Activated CD4-positive, alpha-beta T cell treated with anti-CD3 and anti-CD28 coated beads for 36 hours (primary cell): ENCODE measurements at regions of chr3 and their contacts with region 1.

Region 1: DNA sequence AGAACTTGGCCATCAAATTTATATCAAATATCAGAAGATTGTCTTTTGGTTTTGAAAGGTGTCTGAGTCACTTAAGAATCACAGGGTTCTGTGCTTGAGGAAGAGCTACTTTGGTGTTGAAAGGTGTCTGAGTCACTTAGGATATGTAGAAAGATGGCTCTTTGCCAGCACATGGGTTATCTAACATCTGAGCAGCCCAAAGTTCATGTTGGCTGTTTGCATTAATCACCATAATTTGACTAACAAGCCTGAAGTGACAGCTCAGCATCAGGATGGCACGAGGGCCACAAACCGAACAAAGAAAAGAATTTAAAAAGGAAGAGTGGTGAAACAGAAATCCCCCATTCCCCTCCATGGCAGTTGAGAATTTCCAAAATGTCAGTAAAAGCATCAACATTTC is 190.5 kb upstream of the CMC1 start:
- DNase-seq: peak; percentile 64
- ATAC-seq: peak; percentile 80
- H3K4me3 Mint-ChIP-seq: no peak overlapping the region
- H3K27ac Mint-ChIP-seq: peak overlapping the region; percentile 4
- H3K4me1 Mint-ChIP-seq: peaks cover 32% of the 10 kb centered on the region
- H3K27me3 Mint-ChIP-seq: peaks cover 6% of the 10 kb centered on the region

Region 2: DNA sequence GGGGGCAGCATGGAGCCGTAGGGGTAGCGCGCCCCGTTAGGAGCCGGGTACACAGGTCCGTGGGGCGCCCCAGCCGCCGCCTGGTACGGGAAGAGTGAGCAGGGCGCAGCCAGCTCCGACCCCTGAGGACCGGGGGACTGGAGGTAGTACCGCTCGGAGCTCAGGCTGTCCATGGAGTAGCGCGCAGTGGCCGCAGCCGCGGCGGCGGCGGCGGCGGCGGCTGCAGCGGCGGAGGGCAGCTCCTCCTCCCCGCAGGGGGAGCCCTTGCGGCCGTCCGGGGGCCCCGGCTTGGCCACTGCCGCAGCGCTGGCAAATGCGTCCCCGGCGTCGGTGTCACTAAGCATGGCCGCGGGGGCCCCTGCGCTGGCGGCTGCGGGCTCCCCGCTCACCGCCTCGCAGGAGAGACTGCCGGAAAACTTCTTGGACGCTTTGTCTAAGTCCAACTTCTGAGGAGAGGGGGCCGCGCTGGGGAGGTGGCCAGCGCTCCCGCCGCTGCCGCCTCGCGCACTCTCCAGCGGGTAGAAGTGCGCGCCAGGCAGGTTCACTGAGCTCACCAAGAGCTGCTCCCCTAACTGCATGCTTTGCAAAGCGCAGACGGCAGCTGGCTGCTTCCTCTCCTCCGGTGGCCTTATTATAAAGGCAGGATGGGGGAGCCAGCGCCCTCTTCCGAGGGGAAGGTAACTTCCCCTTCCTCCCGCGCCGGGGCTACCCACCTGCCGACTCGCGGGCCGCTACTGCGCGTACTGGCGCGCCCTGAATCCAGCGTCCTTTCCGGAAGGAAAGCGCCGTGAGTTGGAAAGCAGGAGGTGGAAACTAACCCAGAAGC is 329.0 kb before region 1 on chr3 and contains the start of gene EOMES:
- CTCF ChIA-PET with region 1: no interaction called
- POLR2A ChIA-PET with region 1: no interaction called
- intact Hi-C with region 1: loop called (anchors 5 to 10 kb)
- DNase-seq: peak; percentile 82
- ATAC-seq: peak; percentile 74
- H3K4me3 Mint-ChIP-seq: peak within 1 kb of the TSS; percentile 72
- H3K27ac Mint-ChIP-seq: no peak within 1 kb of the TSS
- H3K4me1 Mint-ChIP-seq: peaks cover 22% of the 10 kb centered on the region
- H3K27me3 Mint-ChIP-seq: peaks cover 72% of the 10 kb centered on the region
- total RNA-seq, gene EOMES: 0.25 TPM

Region 3: DNA sequence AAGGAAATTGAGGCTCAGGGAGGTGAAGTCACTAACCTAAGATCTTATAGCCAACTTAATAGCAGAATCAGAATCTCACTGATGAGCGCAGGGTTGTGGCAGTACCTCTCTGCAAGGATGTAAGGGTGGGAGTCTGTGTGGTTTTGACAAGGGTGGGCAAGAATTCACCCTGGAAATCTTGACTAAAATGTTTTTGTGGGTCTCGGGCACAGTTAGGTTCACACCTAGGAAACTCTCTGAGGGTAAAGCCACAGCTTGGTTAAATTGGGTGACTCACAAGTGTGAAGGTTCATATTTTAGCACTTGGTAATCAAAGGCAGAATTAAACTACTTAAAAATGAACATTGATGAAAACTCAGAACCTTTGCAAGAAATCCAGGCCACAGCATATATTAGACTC is 150.6 kb before region 1 on chr3:
- CTCF ChIA-PET with region 1: no interaction called
- POLR2A ChIA-PET with region 1: no interaction called
- intact Hi-C with region 1: loop called in 1 of 2 experiments (anchors 5 kb)
- DNase-seq: peak; percentile 26
- ATAC-seq: peak; percentile 76
- H3K4me3 Mint-ChIP-seq: no peak overlapping the region
- H3K27ac Mint-ChIP-seq: no peak overlapping the region
- H3K4me1 Mint-ChIP-seq: peaks cover 43% of the 10 kb centered on the region
- H3K27me3 Mint-ChIP-seq: no peaks in the 10 kb centered on the region

Region 4: DNA sequence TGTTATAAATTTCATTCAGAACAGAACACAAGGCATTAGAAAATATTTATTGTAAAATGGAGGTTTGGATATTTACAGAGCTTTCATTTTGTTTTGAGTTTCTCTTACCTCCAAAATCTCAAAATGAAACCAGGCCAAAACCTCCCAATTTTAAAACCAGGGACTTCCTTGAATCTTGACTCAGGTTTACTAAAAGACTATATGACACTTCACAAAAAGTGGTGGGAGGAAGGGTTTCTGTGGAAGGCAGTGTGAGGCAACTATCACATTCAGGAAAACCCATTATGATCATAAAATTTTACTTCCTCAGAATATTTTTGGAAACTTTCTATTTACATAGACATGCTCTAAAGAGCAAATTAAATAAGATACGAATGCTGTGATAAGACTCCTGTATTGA is 123.0 kb before region 1 on chr3:
- CTCF ChIA-PET with region 1: no interaction called
- POLR2A ChIA-PET with region 1: no interaction called
- intact Hi-C with region 1: loop called in 1 of 2 experiments (anchors 5 kb)
- DNase-seq: no peak
- ATAC-seq: peak; percentile 70
- H3K4me3 Mint-ChIP-seq: no peak overlapping the region
- H3K27ac Mint-ChIP-seq: no peak overlapping the region
- H3K4me1 Mint-ChIP-seq: peaks cover 34% of the 10 kb centered on the region
- H3K27me3 Mint-ChIP-seq: no peaks in the 10 kb centered on the region

Region 5: DNA sequence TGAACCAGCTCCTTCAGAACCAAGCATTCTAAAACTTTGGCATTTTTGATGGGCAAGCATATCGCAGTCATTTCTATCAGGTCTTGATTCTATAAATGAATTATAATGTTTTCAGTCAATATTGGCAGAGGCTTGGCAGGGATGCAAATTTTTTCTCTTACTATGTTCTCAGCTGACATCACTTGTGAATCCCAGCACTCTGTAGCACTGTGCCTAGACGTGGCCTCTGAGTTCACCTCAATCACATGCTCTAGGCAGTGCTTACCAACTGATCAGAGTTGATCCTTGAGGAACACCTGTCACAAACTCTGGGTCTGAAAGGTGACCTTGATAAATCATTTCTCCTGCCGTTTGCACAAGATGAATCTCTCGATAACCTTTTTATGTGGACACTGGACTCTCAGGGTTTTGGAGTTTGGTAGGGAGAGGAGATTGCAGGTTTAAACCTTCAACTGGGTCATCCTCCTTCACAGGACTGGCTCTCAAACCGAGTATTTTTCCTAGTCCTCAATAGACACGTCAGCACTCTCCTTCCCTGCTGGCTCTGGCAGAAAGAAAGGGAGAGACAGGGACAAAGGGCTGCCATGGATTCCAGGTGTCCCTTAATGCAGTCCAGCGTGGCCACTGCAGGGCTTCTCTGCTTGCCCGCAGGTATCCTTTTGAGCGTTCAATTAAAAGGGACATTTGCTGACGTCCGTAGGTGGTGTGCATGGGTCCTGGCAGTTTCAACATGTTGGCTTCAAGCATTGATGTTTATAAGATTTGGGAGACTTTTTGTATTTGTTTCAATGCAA is 31.8 kb before region 1 on chr3:
- CTCF ChIA-PET with region 1: interaction called, 3 read pairs
- POLR2A ChIA-PET with region 1: no interaction called
- intact Hi-C with region 1: loop called in 1 of 2 experiments (anchors 2 kb)
- DNase-seq: no peak
- ATAC-seq: peak; percentile 36
- H3K4me3 Mint-ChIP-seq: no peak overlapping the region
- H3K27ac Mint-ChIP-seq: no peak overlapping the region
- H3K4me1 Mint-ChIP-seq: peaks cover 12% of the 10 kb centered on the region
- H3K27me3 Mint-ChIP-seq: no peaks in the 10 kb centered on the region

Region 6: DNA sequence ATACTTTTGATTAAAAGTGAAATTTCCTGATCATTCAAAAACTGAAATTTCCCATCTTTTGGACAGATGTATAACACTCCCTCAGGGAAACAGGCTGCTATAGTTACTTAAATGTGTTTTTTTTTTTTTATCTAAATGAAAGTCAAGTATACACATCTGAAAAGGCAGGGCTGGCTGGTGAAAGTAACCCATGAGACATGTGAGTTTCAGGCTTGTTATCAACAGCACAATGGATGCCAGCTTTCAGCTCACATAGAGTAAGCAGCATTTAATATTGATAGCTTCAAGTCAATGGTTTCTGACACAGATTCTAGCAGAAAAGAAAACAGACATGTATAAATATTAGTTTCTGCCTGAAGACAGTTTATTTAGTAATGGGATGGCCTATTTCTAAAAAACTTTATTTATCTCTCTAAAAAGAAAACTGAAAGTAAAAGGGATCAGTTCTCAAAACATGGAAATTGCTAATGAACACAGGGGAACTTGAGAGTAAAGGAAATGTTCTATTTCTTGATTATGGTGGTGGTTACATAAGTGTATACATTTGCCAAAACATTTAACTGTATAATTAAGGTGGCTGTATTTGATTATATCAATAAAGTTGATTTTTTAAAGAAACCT is 100.8 kb after region 1 on chr3:
- CTCF ChIA-PET with region 1: no interaction called
- POLR2A ChIA-PET with region 1: no interaction called
- intact Hi-C with region 1: no loop called
- DNase-seq: peak; percentile 16
- ATAC-seq: peak; percentile 57
- H3K4me3 Mint-ChIP-seq: no peak overlapping the region
- H3K27ac Mint-ChIP-seq: no peak overlapping the region
- H3K4me1 Mint-ChIP-seq: peaks cover 9% of the 10 kb centered on the region
- H3K27me3 Mint-ChIP-seq: peaks cover 2% of the 10 kb centered on the region

Region 7: GRCh38 chr3:28241221-28242160 is 190.6 kb after region 1 on chr3 and contains the start of gene CMC1:
- CTCF ChIA-PET with region 1: interaction called, 3 read pairs
- POLR2A ChIA-PET with region 1: no interaction called
- intact Hi-C with region 1: loop called (anchors 2 to 5 kb)
- DNase-seq: peak; percentile 96
- ATAC-seq: peak; percentile 97
- H3K4me3 Mint-ChIP-seq: peak within 1 kb of the TSS; percentile 83
- H3K27ac Mint-ChIP-seq: peak within 1 kb of the TSS; percentile 91
- H3K4me1 Mint-ChIP-seq: peaks cover 45% of the 10 kb centered on the region
- H3K27me3 Mint-ChIP-seq: no peaks in the 10 kb centered on the region
- total RNA-seq, gene CMC1: 21.6 to 28.3 TPM

Region 8: GRCh38 chr3:28348629-28349483 is 298.0 kb after region 1 on chr3 and contains the starts of genes AZI2 and ZCWPW2:
- CTCF ChIA-PET with region 1: no interaction called
- POLR2A ChIA-PET with region 1: no interaction called
- intact Hi-C with region 1: loop called in 1 of 2 experiments (anchors 5 kb)
- DNase-seq: peak; percentile 96
- ATAC-seq: peak; percentile 87
- H3K4me3 Mint-ChIP-seq: peak within 1 kb of the TSS; percentile 98
- H3K27ac Mint-ChIP-seq: peak within 1 kb of the TSS; percentile 98
- H3K4me1 Mint-ChIP-seq: peaks cover 43% of the 10 kb centered on the region
- H3K27me3 Mint-ChIP-seq: no peaks in the 10 kb centered on the region
- total RNA-seq, gene AZI2: 52.3 to 78.8 TPM
- total RNA-seq, gene ZCWPW2: 0.37 to 0.39 TPM